Heart right ventricle (tissue), 16 donors: ENCODE measurements at regions of chr6 and their contacts with region 1.

Region 1: GRCh38 chr6:56595490-56596122 is 47.1 kb downstream of the DST start:
- DNase-seq: peak in 1 of 2 donors; percentile 23
- ATAC-seq: peak; percentile 41 to 80 (median 73)
- H3K4me3 ChIP-seq: no peak overlapping the region
- H3K27ac ChIP-seq: no peak overlapping the region
- H3K4me1 ChIP-seq: peaks cover 0 to 25% (median 0%) of the 10 kb centered on the region in 9 donors
- H3K27me3 ChIP-seq: no peaks in the 10 kb centered on the region
- CTCF ChIP-seq: peak; percentile 30 to 73 (median 61)

Region 2: DNA sequence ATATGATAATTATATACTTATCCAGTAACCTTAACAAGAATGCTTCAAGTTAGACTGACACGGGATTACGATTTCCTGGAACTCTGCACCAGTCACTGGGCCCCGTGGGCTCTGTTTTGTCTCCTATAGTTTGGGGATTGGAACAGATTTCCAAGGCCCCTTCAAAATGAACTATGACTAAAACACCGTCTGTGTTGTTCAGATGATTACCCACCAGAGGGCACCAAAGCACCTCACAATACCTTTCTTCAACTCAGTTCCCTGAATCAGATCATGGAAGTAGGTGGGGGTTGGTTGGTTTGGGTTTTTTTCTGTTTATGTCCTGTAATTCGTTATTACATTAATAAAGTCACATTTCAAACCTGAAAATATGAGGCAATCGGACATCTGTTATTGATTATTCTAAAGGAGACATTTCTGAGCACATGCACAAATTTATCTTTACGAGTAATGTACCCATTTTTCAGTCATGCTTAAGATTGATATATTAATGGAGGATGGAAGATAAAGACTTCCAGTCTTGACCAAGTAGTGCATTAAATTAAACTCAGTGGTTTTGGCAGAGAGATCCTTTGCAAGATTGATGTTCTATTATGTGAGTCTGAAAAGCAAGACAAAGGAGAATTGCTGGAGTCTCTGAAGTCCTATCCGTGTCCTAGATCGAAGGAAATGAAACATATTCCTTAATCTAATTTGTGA is 236.3 kb before region 1 on chr6:
- intact Hi-C with region 1: loop called in 9 of 10 experiments (anchors 1 to 5 kb)
- DNase-seq: peak in 1 of 2 donors; percentile 73
- ATAC-seq: peak; percentile 58 to 81 (median 72)
- H3K4me3 ChIP-seq: no peak overlapping the region
- H3K27ac ChIP-seq: no peak overlapping the region
- H3K4me1 ChIP-seq: peaks cover 0 to 17% (median 0%) of the 10 kb centered on the region in 9 donors
- H3K27me3 ChIP-seq: no peaks in the 10 kb centered on the region
- CTCF ChIP-seq: peak; percentile 74 to 90 (median 85)

Region 3: DNA sequence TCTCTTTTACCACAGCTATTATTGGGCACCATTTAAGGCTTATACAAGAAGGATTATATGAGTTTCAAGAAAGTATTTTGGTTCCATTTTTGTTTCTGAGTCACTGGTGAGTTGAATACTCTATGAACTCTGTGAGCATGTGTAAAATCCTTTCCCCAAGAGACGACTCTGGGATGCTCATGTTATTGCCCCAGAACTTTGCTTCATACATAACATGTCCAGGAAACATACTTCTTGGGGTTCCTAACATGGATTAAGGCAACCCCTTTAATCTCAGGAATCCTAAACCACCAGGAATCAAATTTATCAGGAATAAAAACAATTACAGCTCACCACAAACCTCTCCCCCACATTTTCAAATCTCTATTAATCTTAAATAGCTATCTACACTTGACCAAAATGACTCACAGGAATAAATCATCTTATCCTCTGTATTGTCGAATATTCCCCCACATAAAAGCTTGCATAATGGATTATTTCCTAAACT is 230.7 kb before region 1 on chr6:
- intact Hi-C with region 1: loop called in 2 of 10 experiments (anchors 5 kb)
- DNase-seq: no peak
- ATAC-seq: no peak
- H3K4me3 ChIP-seq: no peak overlapping the region
- H3K27ac ChIP-seq: peak overlapping the region in 1 of 10 donors; percentile 10
- H3K4me1 ChIP-seq: peaks cover 0 to 52% (median 35%) of the 10 kb centered on the region in 9 donors
- H3K27me3 ChIP-seq: no peaks in the 10 kb centered on the region
- CTCF ChIP-seq: no peak

Region 4: GRCh38 chr6:56451165-56451739 is 144.4 kb before region 1 on chr6:
- intact Hi-C with region 1: loop called in 1 of 10 experiments (anchors 10 kb)
- DNase-seq: peak; percentile 70 to 83
- ATAC-seq: peak; percentile 78 to 90 (median 84)
- H3K4me3 ChIP-seq: no peak overlapping the region
- H3K27ac ChIP-seq: peak overlapping the region in 9 of 10 donors; percentile 18 to 83 (median 68)
- H3K4me1 ChIP-seq: peaks cover 0 to 32% (median 21%) of the 10 kb centered on the region in 9 donors
- H3K27me3 ChIP-seq: no peaks in the 10 kb centered on the region
- CTCF ChIP-seq: no peak

Region 5: DNA sequence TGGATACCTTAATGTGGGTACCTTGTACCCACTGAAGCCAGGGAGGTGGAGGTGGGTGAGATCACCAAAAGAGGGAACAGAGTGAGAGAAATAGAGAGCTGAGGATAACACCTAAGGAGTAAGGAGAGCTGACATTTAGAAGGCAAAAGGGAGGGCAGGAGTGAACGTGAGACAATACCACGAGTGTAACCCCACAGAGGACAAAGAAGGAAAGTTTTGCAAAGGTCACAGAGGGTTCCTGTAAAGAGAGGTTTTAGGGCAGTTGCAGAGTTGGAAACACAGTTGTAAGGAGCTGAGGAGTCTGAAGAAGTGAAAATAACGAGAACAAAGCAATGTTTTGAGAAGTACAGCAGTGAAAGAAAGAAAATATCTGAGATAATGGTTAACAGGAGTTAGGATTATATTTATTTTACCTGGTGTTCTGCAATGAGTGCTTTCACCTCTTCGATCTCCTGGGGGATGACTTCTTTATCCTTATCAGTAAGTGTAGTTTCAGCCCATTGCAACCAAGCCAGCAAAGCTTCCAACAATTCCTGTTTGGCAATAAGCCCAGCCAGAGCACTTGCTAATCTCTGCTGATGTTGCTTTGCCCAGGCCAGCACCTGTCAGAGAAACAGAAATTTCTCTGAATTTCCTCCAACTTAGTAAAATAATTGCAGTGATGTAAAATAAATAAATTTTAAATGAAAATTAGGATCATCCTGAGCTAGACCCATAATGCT is 119.7 kb before region 1 on chr6:
- intact Hi-C with region 1: loop called in 2 of 10 experiments (anchors 10 kb)
- DNase-seq: peak in 1 of 2 donors; percentile 69
- ATAC-seq: peak in 7 of 8 donors; percentile 70 to 92 (median 86)
- H3K4me3 ChIP-seq: no peak overlapping the region
- H3K27ac ChIP-seq: peak overlapping the region in 3 of 10 donors; percentile 28 to 57 (median 49)
- H3K4me1 ChIP-seq: peaks cover 0 to 27% (median 17%) of the 10 kb centered on the region in 9 donors
- H3K27me3 ChIP-seq: no peaks in the 10 kb centered on the region
- CTCF ChIP-seq: no peak

Region 6: GRCh38 chr6:56542364-56543331 is 53.0 kb before region 1 on chr6:
- intact Hi-C with region 1: no loop called
- DNase-seq: peak; percentile 88 to 93
- ATAC-seq: peak; percentile 93 to 98 (median 95)
- H3K4me3 ChIP-seq: peak overlapping the region; percentile 27 to 73 (median 62)
- H3K27ac ChIP-seq: peak overlapping the region; percentile 77 to 93 (median 92)
- H3K4me1 ChIP-seq: peaks cover 2 to 69% (median 54%) of the 10 kb centered on the region in 9 donors
- H3K27me3 ChIP-seq: no peaks in the 10 kb centered on the region
- CTCF ChIP-seq: peak in 7 of 9 donors; percentile 10 to 74 (median 46)